K562 (cell line): ENCODE measurements at regions of chr15 and their contacts with region 1.

Region 1: DNA sequence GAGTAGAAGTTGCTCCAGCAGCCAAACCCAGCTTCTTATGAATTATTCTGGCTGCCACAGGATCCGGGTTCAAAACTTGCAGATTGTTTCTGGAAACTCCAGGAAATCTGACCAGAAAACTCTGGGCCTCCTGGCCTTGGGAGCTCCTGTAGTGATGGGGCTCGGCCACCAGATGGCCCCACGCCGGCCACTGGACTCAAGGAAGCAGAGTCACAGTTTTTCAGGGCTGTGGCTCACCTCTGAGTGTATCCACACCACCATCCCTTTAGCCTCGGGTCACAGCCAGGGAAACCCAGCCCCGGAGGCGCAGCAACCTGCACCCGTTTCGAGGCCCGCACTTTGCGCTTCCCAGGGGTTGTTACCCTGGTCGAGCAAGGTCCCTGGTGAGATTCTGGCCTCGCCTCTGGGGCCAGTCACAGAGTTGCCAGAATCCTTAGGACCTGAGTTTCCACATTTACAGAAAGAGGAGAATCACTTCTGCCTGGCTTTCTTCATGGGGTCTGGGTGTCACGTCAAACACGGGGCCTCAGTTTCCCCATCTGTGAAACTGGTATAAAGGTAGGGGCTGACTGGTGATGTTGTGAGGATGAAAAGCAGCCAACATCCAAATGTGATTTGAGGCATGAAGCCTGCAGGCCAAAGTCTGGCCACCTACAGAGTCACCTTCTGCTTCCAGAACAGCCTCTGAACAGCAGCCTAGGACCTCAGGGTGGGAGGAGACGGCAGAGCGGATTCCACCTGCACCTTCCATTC is 53.5 kb upstream of the LCTL start:
- DNase-seq: peak; percentile 65 to 86 (median 72)
- ATAC-seq: peak; percentile 76
- H3K4me3 ChIP-seq: no peak overlapping the region
- H3K27ac ChIP-seq: peak overlapping the region; percentile 27; the same call in 2 of the 3 replicates
- H3K4me1 ChIP-seq: peaks cover 55 to 62% of the 10 kb centered on the region in 2 experiments
- H3K27me3 ChIP-seq: no peaks in the 10 kb centered on the region
- CTCF ChIP-seq: peak; percentile 88 to 93 (median 89)
- EP300 ChIP-seq: no peak
- POLR2A ChIP-seq: no peak
- RAD21 ChIP-seq: peak; percentile 72 to 85

Region 2: DNA sequence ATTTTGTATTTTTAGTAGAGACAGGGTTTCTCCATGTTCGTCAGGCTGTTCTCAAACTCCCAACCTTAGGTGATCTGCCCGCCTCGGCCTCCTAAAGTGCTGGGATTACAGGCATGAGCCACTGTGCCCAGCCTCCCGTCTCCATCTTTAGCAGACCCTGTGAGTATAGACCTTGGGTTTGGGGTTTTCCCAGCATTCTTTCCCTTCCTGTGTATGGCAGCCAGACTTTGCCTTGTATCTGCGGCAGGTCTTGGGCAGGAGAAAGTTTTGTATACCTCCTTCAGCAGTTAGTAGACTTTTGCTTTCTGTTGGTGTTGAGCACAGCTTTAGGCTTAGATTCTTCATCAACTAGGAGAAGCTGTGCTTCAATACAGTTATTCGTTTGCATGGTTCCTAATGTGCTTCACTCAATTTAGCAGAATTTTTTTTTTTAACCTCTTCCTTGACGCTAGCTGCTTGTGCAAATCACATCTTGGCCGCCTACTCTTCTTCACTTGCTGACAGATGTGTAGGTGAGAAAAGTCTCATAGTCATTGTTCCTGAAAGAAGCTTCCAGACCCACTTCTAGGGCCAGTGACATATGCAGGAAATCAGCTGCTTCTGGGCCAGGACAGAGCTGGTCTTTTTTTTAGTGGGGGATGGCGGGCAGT is 194.2 kb before region 1 on chr15:
- CTCF ChIA-PET with region 1: no interaction called
- POLR2A ChIA-PET with region 1: no interaction called
- in situ Hi-C with region 1: no loop called
- intact Hi-C with region 1: no loop called
- DNase-seq: no peak
- ATAC-seq: no peak
- H3K4me3 ChIP-seq: no peak overlapping the region
- H3K27ac ChIP-seq: no peak overlapping the region
- H3K4me1 ChIP-seq: no peaks in the 10 kb centered on the region
- H3K27me3 ChIP-seq: no peaks in the 10 kb centered on the region
- CTCF ChIP-seq: no peak
- EP300 ChIP-seq: no peak
- POLR2A ChIP-seq: no peak
- RAD21 ChIP-seq: no peak

Region 3: DNA sequence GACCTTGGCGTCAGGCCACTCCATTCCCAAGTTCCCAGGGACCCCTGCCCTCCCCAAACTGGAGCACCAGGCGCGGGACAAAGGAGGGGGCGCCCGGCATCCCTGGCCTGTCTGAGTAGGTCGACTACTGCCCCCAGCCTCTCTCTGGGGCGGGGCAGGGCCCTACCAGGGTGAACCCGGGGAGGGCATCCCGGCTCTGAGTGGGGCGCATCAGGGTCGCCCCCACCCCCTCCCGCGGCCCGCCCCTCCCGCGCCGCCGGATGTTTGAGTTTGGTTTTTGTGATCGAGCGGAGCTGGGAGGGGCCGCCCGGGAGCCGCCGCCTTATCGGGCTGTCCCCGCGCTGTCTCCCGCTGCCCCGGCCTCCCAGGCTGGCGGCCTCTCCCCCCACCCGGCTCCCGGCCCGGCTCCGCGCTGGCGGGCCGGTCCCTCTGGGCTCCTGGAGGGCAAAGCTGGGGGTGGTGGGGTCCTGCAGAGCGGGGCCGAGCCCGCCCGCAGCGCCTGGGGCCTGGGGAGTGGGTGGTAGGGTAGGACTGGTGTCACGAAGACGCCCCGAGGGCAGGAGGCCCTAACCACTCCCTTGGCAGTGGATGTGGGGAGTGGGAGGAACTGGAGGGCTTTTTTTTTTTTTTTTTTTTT is 35.5 kb after region 1 on chr15:
- CTCF ChIA-PET with region 1: no interaction called
- POLR2A ChIA-PET with region 1: interaction called, 4 read pairs
- in situ Hi-C with region 1: no loop called
- intact Hi-C with region 1: loop called (anchors 5 kb)
- DNase-seq: peak; percentile 80 to 89 (median 84)
- ATAC-seq: peak; percentile 91
- H3K4me3 ChIP-seq: peak overlapping the region; percentile 33; the same call in 1 of the 2 replicates
- H3K27ac ChIP-seq: peak overlapping the region; percentile 80
- H3K4me1 ChIP-seq: peaks cover 58 to 77% of the 10 kb centered on the region in 2 experiments
- H3K27me3 ChIP-seq: no peaks in the 10 kb centered on the region
- CTCF ChIP-seq: 0 out of 6 replicates have a peak, but pooled peaks of 1 of the 3 experiments have one; percentile 3
- EP300 ChIP-seq: peak; percentile 13; the same call in 1 of the 2 replicates
- POLR2A ChIP-seq: no peak
- RAD21 ChIP-seq: no peak

Region 4: GRCh38 chr15:66679657-66680108 is 60.4 kb after region 1 on chr15:
- CTCF ChIA-PET with region 1: no interaction called
- POLR2A ChIA-PET with region 1: interaction called, 3 read pairs
- in situ Hi-C with region 1: no loop called
- intact Hi-C with region 1: loop called (anchors 5 kb)
- DNase-seq: peak; percentile 92 to 97 (median 94)
- ATAC-seq: peak; percentile 98
- H3K4me3 ChIP-seq: no peak overlapping the region
- H3K27ac ChIP-seq: peak overlapping the region; percentile 60
- H3K4me1 ChIP-seq: peaks cover 32 to 35% of the 10 kb centered on the region in 2 experiments
- H3K27me3 ChIP-seq: no peaks in the 10 kb centered on the region
- CTCF ChIP-seq: peak in 1 of 3 experiments; percentile 10; a peak in 1 of 6 replicates
- EP300 ChIP-seq: peak; percentile 96
- POLR2A ChIP-seq: no peak
- RAD21 ChIP-seq: peak; percentile 40 to 55

Region 5: DNA sequence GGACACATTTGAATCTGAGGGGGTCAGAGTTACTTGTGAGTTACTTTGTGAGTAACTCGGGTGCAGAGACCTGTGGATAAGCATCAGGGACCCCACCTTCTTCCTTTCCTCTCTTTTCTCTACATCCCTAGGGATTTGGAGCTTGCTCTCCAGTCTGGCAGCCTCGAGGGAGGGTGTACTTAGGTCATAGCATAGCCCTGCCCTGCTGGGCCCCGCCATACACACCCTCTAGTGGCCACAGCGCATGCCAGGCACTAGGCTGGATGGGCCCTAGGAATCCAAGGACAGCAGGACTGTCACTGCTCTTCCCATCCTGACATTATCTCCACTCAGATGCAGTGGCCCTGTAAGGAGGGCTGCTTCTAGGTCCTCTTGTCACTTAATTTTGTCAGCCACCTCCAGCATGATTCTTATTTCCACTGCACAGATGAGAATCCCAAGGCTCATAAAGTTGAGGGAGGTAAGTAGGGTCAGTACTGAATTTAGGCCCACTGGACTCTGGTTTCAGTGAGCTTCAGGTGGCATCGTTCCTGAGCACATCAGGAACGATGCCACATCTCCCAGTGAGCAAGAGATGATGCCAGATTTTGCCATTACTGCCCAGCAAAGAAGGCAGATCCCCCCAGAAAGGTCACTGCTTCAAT is 79.1 kb after region 1 on chr15:
- CTCF ChIA-PET with region 1: interaction called, 5 read pairs
- POLR2A ChIA-PET with region 1: interaction called, 3 read pairs
- in situ Hi-C with region 1: no loop called
- intact Hi-C with region 1: loop called (anchors 2 kb)
- DNase-seq: peak in 3 of 4 experiments; percentile 47 to 73 (median 61)
- ATAC-seq: peak; percentile 51
- H3K4me3 ChIP-seq: no peak overlapping the region
- H3K27ac ChIP-seq: no peak overlapping the region
- H3K4me1 ChIP-seq: peaks cover 8 to 28% of the 10 kb centered on the region in 2 experiments; a peak in 3 of 5 replicates
- H3K27me3 ChIP-seq: no peaks in the 10 kb centered on the region
- CTCF ChIP-seq: peak; percentile 73 to 82 (median 74)
- EP300 ChIP-seq: no peak
- POLR2A ChIP-seq: no peak
- RAD21 ChIP-seq: peak; percentile 58 to 80

Region 6: GRCh38 chr15:66720206-66721006 is 101.1 kb after region 1 on chr15:
- CTCF ChIA-PET with region 1: no interaction called
- POLR2A ChIA-PET with region 1: no interaction called
- in situ Hi-C with region 1: no loop called
- intact Hi-C with region 1: no loop called
- DNase-seq: peak in 3 of 4 experiments; percentile 7 to 65 (median 62)
- ATAC-seq: peak; percentile 34
- H3K4me3 ChIP-seq: no peak overlapping the region
- H3K27ac ChIP-seq: 0 out of 3 replicates have a peak overlapping the region, but pooled peaks have one; percentile 12
- H3K4me1 ChIP-seq: peaks cover 36 to 51% of the 10 kb centered on the region in 2 experiments; a peak in 4 of 5 replicates
- H3K27me3 ChIP-seq: no peaks in the 10 kb centered on the region
- CTCF ChIP-seq: no peak
- EP300 ChIP-seq: no peak
- POLR2A ChIP-seq: no peak
- RAD21 ChIP-seq: no peak

Region 7: GRCh38 chr15:66774001-66774814 is 154.9 kb after region 1 on chr15:
- CTCF ChIA-PET with region 1: interaction called, 15 read pairs
- POLR2A ChIA-PET with region 1: interaction called, 3 read pairs
- in situ Hi-C with region 1: loop called (anchors 10 kb)
- intact Hi-C with region 1: loop called (anchors 5 kb)
- DNase-seq: peak; percentile 87 to 93 (median 92)
- ATAC-seq: peak; percentile 99
- H3K4me3 ChIP-seq: no peak overlapping the region
- H3K27ac ChIP-seq: no peak overlapping the region
- H3K4me1 ChIP-seq: peaks cover 16 to 18% of the 10 kb centered on the region in 2 experiments
- H3K27me3 ChIP-seq: no peaks in the 10 kb centered on the region
- CTCF ChIP-seq: peak; percentile 98 to 99 (median 99)
- EP300 ChIP-seq: no peak; the same call in 1 of the 2 replicates
- POLR2A ChIP-seq: no peak
- RAD21 ChIP-seq: peak; percentile 84 to 94

Region 8: DNA sequence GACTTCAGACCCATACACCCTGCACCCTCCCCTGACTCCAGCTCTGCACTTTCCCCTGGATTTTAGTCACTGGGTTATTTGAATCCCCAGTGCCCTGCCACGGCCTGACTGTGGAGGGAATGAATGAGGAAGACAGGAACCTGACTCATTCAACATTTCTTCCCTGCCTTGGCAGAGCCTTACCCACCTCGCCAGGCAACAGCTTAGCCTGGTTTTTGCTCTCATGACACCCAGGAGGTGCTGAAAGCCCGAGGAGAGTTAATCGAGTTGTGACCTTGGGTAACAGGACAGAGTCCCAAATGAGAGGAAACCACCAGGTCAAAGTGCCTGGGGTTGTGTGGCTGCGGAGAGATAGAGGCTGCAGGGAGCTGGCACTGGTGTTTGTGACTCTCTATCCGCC is 211.0 kb after region 1 on chr15:
- CTCF ChIA-PET with region 1: no interaction called
- POLR2A ChIA-PET with region 1: no interaction called
- in situ Hi-C with region 1: no loop called
- intact Hi-C with region 1: no loop called
- DNase-seq: no peak
- ATAC-seq: no peak
- H3K4me3 ChIP-seq: no peak overlapping the region
- H3K27ac ChIP-seq: no peak overlapping the region
- H3K4me1 ChIP-seq: peaks cover 0 to 9% of the 10 kb centered on the region in 2 experiments; a peak in 2 of 5 replicates
- H3K27me3 ChIP-seq: no peaks in the 10 kb centered on the region
- CTCF ChIP-seq: no peak
- EP300 ChIP-seq: no peak
- POLR2A ChIP-seq: no peak
- RAD21 ChIP-seq: no peak